ENCODE measurements at regions of chr1 and their contacts with region 1.

Region 1: DNA sequence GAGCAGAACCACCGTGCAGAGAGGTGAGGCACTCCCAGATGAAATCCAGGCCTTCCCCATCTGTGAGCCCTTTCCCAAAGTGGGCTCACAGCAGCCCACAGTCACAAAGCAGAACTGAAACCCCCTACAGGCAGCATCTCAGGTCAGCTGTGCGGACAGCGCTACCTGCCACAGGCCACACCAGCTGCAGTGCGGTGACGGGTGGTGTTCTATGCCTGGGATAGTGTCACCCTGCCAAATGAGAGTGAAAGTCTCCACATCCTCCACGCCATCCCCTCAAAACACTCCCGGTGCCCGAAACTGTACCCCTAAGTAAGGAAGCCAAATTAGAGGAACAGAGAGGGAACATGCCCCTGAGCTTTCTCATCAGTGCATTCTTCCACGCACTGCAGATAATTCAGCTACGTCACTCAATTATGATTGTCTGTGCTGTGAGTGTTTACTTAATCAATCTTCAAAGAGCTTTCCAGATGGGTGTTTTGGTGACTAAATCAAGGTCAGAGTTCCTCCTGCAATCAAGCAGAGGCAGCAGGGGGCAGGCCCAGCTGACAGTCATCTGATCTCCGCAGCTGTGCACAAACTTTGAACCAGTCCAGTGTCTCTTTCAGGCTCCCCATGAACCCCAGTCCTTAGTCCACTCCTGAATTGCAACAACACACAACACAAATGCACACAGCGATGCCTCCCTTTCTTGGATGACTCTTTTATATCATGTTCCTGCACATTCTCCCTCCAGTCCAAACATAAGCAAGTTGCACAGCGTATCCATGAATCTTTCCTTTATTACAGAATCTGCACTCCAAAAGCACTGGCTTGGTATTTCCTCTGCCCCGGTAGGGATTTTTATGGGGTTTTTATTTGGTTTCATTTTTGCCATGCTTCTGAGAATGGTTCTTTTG is 150.0 kb downstream of the TOMM20 start:
- DNase-seq: peak; percentile 69
- H3K4me3 Mint-ChIP-seq: peak overlapping the region; percentile 71
- H3K27ac Mint-ChIP-seq: peak overlapping the region; percentile 94
- H3K4me1 Mint-ChIP-seq: peaks cover 83% of the 10 kb centered on the region
- H3K27me3 Mint-ChIP-seq: no peaks in the 10 kb centered on the region

Region 2: DNA sequence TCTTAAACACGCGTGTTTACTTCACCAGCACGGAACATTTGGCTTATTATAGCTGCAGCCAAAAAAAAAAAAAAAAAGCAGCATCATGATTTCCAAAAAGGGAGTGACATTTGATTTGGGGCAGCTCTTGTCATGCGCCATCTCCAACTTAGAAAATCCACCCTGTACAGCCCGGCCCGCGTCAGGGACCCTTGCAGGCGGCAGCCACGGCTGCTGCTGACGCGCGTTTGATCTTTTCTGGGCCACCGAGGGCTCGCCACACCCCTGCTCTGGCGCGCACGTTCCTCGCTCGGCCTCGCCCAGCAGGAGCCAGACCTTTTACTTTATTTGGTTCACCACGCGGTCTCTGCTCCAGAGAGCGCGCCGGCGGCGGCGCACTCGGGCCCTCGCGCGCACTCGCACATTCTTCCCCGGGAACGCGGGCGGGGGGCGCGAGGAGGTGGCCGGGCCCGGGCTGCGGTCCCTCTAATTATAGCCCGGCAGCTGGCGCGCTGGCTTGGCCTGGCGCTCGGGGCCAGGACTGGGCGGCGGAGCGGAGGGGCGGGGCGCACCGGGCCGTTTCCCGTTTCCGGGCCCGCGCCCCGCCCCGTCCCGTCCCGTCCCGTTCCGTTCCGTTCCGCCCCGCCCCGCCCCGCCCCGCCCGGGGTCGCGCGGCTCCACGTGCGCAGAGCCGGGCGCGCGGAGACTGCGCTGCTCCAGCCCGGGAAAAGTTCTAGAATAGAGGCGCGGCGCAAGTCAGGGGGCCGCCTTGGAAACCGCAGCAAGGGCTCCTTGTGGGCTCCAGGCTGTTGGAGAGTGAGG is 378.8 kb before region 1 on chr1:
- CTCF ChIA-PET with region 1: interaction called, 5 read pairs
- POLR2A ChIA-PET with region 1: interaction called, 17 read pairs
- DNase-seq: peak; percentile 77
- H3K4me3 Mint-ChIP-seq: peak overlapping the region; percentile 85
- H3K27ac Mint-ChIP-seq: peak overlapping the region; percentile 96
- H3K4me1 Mint-ChIP-seq: peaks cover 52% of the 10 kb centered on the region
- H3K27me3 Mint-ChIP-seq: no peaks in the 10 kb centered on the region

Region 3: DNA sequence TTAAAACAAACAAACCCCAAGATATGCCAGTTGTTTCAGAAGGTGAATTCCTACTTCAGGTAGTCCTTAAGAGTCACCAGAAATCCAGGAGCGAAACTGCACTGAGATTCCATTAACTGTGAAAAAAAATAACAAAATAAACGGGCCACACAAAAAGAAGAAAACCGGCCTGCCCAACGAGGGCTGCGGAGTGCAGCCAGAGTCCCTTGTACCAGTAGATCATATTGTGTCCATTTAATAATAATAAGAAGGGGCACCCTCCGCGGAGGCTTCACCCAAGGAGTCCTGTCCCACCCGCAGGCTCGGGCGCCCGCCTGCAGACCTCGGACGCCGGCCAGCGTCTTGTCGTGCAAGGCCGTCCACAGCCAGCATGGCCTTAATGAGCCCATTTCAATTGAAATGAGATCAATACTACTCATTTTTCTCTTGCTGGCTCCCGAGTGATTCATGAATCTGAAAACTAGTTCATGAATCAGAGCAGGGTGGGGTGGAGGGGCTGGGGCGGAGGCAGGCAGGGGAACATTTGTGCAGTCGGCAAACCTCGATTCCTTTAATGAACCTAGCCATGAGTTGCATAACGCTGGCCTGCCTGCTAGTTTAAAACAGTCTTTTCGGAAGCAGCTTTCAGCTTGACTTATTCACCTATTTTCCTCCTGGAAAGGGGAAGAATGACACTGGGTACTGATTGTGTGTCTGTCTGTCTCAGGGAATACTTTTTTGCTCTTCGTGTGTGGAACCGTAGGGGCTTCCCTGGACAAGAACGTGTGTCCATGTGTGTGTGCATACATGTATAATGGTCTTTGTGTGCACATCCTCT is 255.5 kb before region 1 on chr1:
- CTCF ChIA-PET with region 1: interaction called, 4 read pairs
- POLR2A ChIA-PET with region 1: interaction called, 28 read pairs
- DNase-seq: peak; percentile 51
- H3K4me3 Mint-ChIP-seq: peak overlapping the region; percentile 76
- H3K27ac Mint-ChIP-seq: peak overlapping the region; percentile 89
- H3K4me1 Mint-ChIP-seq: peaks cover 67% of the 10 kb centered on the region
- H3K27me3 Mint-ChIP-seq: no peaks in the 10 kb centered on the region

Region 4: GRCh38 chr1:234925440-234926263 is 53.0 kb before region 1 on chr1:
- CTCF ChIA-PET with region 1: interaction called, 3 read pairs
- POLR2A ChIA-PET with region 1: interaction called, 14 read pairs
- DNase-seq: no peak
- H3K4me3 Mint-ChIP-seq: peak overlapping the region; percentile 53
- H3K27ac Mint-ChIP-seq: peak overlapping the region; percentile 87
- H3K4me1 Mint-ChIP-seq: peaks cover 40% of the 10 kb centered on the region
- H3K27me3 Mint-ChIP-seq: no peaks in the 10 kb centered on the region

Region 5: DNA sequence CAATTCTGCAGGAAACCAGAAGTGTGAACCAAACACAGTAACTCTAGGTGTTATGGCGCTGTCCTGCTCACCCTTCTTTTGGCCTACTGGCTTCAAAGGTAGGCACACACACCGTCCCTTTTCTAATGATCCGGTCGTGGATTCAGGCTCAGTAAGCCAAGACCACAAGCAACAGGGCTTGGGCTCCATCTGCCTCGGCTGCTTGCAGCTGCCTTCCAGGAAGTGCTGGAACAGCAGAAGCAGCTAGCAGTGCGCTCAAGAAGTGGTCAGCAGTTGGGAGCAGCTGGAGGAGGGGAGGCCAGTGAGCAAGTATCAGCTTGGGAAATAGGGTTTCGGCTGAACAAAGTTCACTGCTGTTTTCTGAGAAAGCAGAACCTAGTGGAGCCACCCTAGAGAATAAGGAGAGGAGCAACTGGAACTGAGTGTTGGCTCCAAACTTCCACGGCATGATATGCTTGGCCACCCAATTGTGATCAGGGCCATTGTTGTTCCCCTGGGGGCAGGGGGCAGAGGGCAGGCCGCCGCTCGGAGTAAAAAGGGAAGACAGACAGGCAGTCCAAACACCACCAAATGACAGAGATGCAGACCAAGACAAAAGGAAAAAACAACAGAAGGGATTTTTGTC is 23.4 kb before region 1 on chr1:
- CTCF ChIA-PET with region 1: interaction called, 5 read pairs
- POLR2A ChIA-PET with region 1: interaction called, 15 read pairs
- DNase-seq: no peak
- H3K4me3 Mint-ChIP-seq: no peak overlapping the region
- H3K27ac Mint-ChIP-seq: peak overlapping the region; percentile 73
- H3K4me1 Mint-ChIP-seq: peaks cover 46% of the 10 kb centered on the region
- H3K27me3 Mint-ChIP-seq: no peaks in the 10 kb centered on the region

Region 6: GRCh38 chr1:234963180-234963903 is 15.3 kb before region 1 on chr1:
- CTCF ChIA-PET with region 1: interaction called, 4 read pairs
- POLR2A ChIA-PET with region 1: interaction called, 50 read pairs
- DNase-seq: peak; percentile 92
- H3K4me3 Mint-ChIP-seq: peak overlapping the region; percentile 38
- H3K27ac Mint-ChIP-seq: peak overlapping the region; percentile 89
- H3K4me1 Mint-ChIP-seq: peaks cover 65% of the 10 kb centered on the region
- H3K27me3 Mint-ChIP-seq: no peaks in the 10 kb centered on the region

Measured in activated CD4-positive, alpha-beta memory T cell treated with anti-CD3 and anti-CD28 coated beads, Interleukin-2, amount 10 ng/mL, durations not matched to agents 7 days and 5 days (primary cell).